Endothelial cell of umbilical vein (primary cell): ENCODE measurements at regions of chr1 and their contacts with region 1.

Region 1: GRCh38 chr1:183370399-183371058 is 47.7 kb downstream of the NMNAT2 start:
- DNase-seq: no peak
- H3K4me3 ChIP-seq: no peak overlapping the region
- H3K27ac ChIP-seq: no peak overlapping the region
- H3K4me1 ChIP-seq: no peaks in the 10 kb centered on the region
- H3K27me3 ChIP-seq: peaks cover 0 to 5% of the 10 kb centered on the region in 2 experiments
- CTCF ChIP-seq: no peak
- POLR2A ChIP-seq: no peak

Region 2: DNA sequence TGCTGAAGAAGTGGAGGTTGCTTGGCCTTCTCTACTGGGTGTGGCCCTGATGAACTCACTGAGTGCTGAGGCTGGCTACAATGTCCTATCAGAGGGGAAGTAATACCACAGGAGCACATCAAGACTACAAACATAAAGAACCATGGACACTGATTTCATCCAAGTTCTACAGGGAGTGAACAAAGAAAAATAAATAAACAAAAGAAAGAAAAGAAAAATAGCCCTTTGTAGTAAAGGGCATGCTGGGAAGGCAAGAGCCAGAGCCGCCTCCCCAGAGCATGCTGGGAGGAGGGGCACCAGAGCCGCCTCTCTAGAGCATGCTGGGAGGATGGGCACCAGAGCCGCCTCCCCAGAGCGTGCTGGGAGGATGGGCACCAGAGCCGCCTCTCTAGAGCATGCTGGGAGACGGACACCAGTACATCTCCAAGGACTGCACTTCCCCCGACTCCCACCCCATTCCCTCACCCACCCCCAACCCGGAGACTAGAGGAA is 118.5 kb before region 1 on chr1:
- CTCF ChIA-PET with region 1: no interaction called
- POLR2A ChIA-PET with region 1: no interaction called
- dilution Hi-C with region 1: no loop called
- intact Hi-C with region 1: no loop called
- DNase-seq: no peak
- H3K4me3 ChIP-seq: no peak overlapping the region
- H3K27ac ChIP-seq: no peak overlapping the region
- H3K4me1 ChIP-seq: peaks cover 6% of the 10 kb centered on the region
- H3K27me3 ChIP-seq: no peaks in the 10 kb centered on the region
- CTCF ChIP-seq: no peak
- POLR2A ChIP-seq: no peak

Region 3: GRCh38 chr1:183970516-183971300 is 600.2 kb after region 1 on chr1:
- CTCF ChIA-PET with region 1: no interaction called
- POLR2A ChIA-PET with region 1: no interaction called
- dilution Hi-C with region 1: no loop called
- intact Hi-C with region 1: loop called (anchors 10 kb)
- DNase-seq: peak; percentile 74
- H3K4me3 ChIP-seq: no peak overlapping the region
- H3K27ac ChIP-seq: no peak overlapping the region
- H3K4me1 ChIP-seq: no peaks in the 10 kb centered on the region
- H3K27me3 ChIP-seq: peaks cover 0 to 2% of the 10 kb centered on the region in 2 experiments
- CTCF ChIP-seq: no peak
- POLR2A ChIP-seq: no peak